ENCODE measurements at regions of chr3 and their contacts with region 1.

Region 1: DNA sequence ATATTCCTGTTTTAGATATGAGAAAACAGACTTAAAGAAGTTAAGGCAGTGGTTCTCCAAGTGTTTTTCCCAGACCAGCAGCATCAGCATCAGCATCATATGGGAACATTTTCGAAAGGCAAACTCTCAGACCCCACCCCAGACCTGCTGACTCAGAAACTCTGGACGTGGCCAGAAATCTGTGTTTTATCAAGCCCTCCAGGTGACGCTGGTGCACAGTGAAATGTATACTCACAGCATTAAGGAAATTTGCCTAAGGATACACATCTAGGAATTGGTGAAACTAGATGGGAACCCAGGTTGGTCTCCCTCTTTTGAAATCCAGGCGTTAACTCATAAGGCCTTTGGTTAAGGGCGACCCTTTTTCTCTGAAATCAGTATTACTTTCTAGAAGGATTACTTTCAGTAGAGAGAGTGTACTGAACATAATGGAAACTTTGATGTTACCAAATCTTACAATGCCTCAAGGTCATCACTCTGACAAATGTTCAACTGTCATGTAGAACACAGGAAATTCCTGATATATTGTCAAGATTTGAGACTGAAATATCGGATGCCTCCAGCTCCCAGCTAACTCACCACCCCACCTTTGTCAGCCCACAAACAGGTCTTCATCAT is 910.2 kb downstream of the ROBO1 start:
- DNase-seq: no peak
- ATAC-seq: no peak
- H3K4me3 ChIP-seq: no peak overlapping the region
- H3K27ac ChIP-seq: no peak overlapping the region
- H3K4me1 ChIP-seq: peaks cover 3% of the 10 kb centered on the region
- H3K27me3 ChIP-seq: no peaks in the 10 kb centered on the region
- CTCF ChIP-seq: no peak
- POLR2A ChIP-seq: no peak
- RAD21 ChIP-seq: no peak

Region 2: GRCh38 chr3:78066286-78066685 is 791.3 kb before region 1 on chr3:
- CTCF ChIA-PET with region 1: interaction called, 16 read pairs
- POLR2A ChIA-PET with region 1: no interaction called
- dilution Hi-C with region 1: no loop called
- in situ Hi-C with region 1: no loop called
- intact Hi-C with region 1: no loop called
- DNase-seq: no peak
- ATAC-seq: no peak
- H3K4me3 ChIP-seq: no peak overlapping the region
- H3K27ac ChIP-seq: no peak overlapping the region
- H3K4me1 ChIP-seq: no peaks in the 10 kb centered on the region
- H3K27me3 ChIP-seq: no peaks in the 10 kb centered on the region
- CTCF ChIP-seq: no peak
- POLR2A ChIP-seq: no peak
- RAD21 ChIP-seq: no peak